Motor neuron (in vitro differentiated cells): ENCODE measurements at regions of chr1 and their contacts with region 1.

Region 1: DNA sequence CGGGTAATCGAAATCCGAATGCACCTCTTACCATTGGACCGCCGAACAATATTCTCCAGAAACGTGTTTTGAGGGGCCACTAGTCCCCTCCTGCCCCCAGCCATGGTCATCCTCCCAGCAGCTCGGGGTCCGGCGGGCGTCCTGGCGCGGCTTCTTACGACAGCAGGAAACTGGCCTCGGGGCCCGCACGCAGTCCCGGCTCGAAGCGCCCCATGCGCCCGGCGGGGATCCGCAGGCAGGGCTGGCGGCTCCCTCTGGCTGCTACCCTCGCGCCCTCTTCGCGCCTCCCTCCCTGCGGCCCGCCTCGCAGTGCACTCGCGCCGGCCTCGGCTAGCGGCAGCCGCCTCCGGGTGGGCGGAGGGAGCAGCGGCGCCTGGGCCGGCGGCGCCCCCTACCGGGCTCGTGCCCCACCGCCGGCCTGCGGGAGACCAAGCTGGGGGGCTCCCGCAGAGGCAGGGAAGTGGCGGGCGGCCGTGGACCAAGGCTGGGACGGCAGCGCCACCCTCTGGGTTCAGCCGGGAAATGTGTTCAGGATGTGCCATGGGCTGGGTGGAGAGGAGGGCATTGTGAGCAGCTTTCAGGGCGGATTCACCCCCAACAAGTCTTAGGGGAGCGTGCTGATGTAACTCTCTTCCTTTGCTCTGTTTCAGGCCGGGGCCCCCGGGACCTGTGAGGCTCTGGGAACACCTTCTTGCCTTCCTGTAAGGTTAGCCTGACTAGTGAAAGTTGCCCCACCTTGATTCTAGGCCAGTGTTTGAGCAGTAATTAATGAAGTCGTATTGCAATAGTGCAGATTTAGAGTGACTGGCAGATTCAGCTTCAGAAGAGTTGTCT is at the start of gene KCNH1:
- ATAC-seq: peak; percentile 92 to 98 (median 96)
- H3K4me3 ChIP-seq: peak within 1 kb of the TSS; percentile 38 to 50 (median 43)
- H3K27ac ChIP-seq: peak within 1 kb of the TSS in 1 of 2 donors; percentile 24
- H3K4me1 ChIP-seq: peaks cover 5 to 7% of the 10 kb centered on the region in 2 donors
- total RNA-seq, gene KCNH1: 1.2 to 22.5 (median 6.2) TPM

Region 2: DNA sequence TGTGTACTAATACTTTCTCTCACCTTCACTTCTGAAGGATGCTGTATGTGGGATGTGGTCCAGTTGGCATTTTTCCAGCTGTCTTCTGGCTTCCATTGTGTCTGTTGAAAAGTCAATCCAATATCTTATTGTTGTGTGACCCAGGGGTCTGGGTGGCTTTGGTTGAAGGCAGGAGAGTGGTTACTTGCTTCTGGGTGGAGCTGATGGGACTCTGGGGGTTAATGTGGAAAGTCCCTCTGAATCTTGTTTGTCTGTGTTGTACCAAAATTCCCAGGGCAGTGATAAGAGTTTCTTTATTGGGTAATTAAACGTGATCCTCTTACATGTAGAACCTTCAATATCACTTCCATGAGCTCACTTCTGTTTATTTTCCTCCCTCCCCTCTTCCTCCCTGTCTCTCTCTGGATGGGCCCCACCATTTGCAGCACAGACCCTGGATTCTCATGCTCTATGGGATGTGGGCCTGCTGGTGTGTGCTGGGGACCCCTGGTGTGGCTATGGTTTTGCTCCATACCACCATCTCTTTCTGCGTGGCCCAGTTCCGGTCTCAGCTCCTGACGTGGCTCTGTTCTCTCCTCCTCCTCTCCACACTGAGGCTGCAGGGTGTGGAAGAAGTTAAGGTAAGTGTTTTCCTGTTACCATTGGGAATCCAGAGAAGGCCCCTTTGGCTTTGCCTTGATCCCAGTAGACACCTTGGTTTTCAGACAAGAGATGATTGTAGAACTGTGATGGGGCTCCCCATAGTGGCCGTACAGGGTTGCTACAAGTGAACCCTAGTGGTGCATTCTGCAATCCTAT is 733.8 kb before region 1 on chr1:
- in situ Hi-C with region 1: loop called in 8 of 9 experiments (anchors 10 to 25 kb)
- ATAC-seq: peak; percentile 58 to 100 (median 86)
- H3K4me3 ChIP-seq: no peak overlapping the region
- H3K27ac ChIP-seq: no peak overlapping the region
- H3K4me1 ChIP-seq: peaks cover 0 to 4% of the 10 kb centered on the region in 2 donors

Region 3: DNA sequence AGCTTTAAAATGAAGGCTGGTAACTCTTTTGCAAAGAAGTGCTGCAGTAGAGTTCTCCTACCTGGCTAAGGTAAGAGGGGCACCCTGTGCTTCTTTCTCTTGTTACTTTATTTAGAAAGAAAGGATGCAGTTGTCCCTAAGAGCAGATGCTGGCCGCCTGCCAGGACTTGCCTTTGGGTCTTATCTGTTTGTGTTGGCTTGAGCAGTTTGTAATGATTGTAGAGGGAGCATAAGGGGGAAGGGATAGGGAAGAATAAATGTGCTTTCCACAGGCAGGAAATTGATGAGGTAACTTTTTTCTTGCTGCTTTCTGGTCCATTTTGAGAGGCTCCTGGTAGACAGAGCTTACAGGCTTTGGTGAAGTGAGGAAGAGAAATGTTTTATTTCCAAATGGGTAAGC is 575.8 kb before region 1 on chr1:
- in situ Hi-C with region 1: loop called in 1 of 9 experiments (anchors 25 kb)
- ATAC-seq: no peak
- H3K4me3 ChIP-seq: no peak overlapping the region
- H3K27ac ChIP-seq: no peak overlapping the region
- H3K4me1 ChIP-seq: peaks cover 4 to 8% of the 10 kb centered on the region in 2 donors

Region 4: GRCh38 chr1:210584439-210585113 is 549.5 kb before region 1 on chr1:
- in situ Hi-C with region 1: loop called in 8 of 9 experiments (anchors 10 to 25 kb)
- ATAC-seq: peak; percentile 52 to 100 (median 99)
- H3K4me3 ChIP-seq: no peak overlapping the region
- H3K27ac ChIP-seq: no peak overlapping the region
- H3K4me1 ChIP-seq: peaks cover 3% of the 10 kb centered on the region in 2 donors

Region 5: DNA sequence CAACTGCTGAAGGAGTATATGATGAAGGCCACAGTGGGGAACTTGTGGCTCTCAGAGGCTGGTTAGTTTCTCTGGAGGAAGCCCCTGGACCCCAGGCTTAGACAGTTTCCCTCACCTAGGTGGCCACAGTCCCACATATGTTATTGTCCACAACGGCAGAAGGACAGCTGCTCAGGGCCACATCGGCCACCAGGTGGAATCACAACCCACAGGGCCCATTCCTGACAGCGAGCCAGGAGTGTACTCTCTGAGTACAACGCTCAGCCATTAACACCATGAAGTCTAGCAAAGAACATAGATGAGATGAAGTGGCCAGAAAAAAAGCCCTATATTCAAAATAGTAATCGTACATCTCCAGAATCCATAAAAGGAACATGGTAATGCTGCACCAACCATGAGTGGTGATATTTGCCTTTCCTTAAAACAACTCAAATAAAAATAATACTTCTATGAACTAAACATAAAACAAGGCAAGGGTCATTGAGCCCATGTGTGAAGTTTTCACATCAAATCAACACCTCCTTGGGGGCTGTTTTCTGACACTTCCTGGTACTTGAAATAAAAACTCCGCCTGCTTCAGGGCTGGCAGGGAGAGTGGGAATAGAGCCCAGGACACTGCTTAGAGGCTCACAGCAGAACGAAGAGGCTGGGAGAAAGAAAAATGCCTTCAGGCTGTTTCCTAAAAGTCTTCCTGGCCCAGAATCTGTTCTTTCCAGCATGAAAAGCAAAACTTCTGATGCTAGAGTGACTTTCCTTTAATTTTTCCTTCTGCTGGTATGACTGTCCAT is 422.0 kb before region 1 on chr1:
- in situ Hi-C with region 1: loop called in 1 of 9 experiments (anchors 25 kb)
- ATAC-seq: peak in 2 of 8 experiments; percentile 12 to 23
- H3K4me3 ChIP-seq: no peak overlapping the region
- H3K27ac ChIP-seq: no peak overlapping the region
- H3K4me1 ChIP-seq: peaks cover 10 to 18% of the 10 kb centered on the region in 2 donors

Region 6: DNA sequence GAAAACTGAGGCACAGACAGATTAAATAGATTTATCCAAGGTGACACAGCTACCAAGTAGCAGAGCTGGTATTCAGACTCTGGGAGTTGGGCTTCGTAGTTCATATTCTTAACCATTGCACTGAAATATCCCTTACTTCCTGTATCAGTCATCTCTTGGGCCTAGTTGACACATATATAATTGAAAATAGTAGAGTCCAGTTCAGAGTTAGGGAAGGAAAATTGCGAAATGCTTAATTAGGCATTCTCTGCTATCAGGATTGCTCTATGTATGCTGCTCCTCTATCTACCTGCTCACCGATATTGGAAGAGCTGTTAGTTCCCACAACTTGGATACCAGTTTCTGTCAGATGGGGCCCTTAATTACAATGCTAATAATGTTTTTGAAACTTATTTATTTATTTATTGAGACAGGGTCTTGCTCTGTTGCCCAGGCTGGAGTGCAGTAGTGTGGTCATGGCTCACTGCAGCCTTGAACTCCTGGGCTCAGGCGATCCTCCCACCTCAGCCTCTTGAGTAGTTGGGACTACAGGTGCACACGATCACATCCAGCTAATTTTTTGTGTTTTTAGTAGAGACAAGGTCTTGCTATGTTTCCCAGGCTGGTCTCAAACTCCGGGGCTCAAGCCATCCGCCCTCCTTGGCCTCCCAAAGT is 133.3 kb after region 1 on chr1:
- in situ Hi-C with region 1: no loop called
- ATAC-seq: no peak
- H3K4me3 ChIP-seq: no peak overlapping the region
- H3K27ac ChIP-seq: no peak overlapping the region
- H3K4me1 ChIP-seq: no peaks in the 10 kb centered on the region